ENCODE measurements at regions of chr13 and their contacts with region 1.

Region 1: GRCh38 chr13:27251166-27252091 is at the start of gene RPL21:
- DNase-seq: peak; percentile 93 to 96
- H3K4me3 ChIP-seq: peak within 1 kb of the TSS; percentile 70 to 86 (median 79)
- H3K27ac ChIP-seq: peak within 1 kb of the TSS; percentile 91 to 96 (median 94)
- H3K4me1 ChIP-seq: peaks cover 17 to 18% of the 10 kb centered on the region in 2 donors
- H3K27me3 ChIP-seq: no peaks in the 10 kb centered on the region
- CTCF ChIP-seq: peak in 1 of 6 experiments; percentile 8
- POLR2A ChIP-seq: peak; percentile 45 to 83
- total RNA-seq, gene RPL21: 553 to 1,479 (median 807) TPM

Region 2: GRCh38 chr13:27449936-27450828 is 198.8 kb after region 1 on chr13 and contains the start of gene MTIF3:
- intact Hi-C with region 1: loop called (anchors 10 kb)
- DNase-seq: peak; percentile 96 to 98
- H3K4me3 ChIP-seq: peak within 1 kb of the TSS; percentile 74 to 94 (median 82)
- H3K27ac ChIP-seq: peak within 1 kb of the TSS; percentile 99 to 100 (median 99)
- H3K4me1 ChIP-seq: peaks cover 19 to 26% of the 10 kb centered on the region in 2 donors
- H3K27me3 ChIP-seq: no peaks in the 10 kb centered on the region
- CTCF ChIP-seq: peak in 1 of 6 experiments; percentile 3
- POLR2A ChIP-seq: peak; percentile 7 to 90
- total RNA-seq, gene MTIF3: 36.4 to 68.2 (median 54.8) TPM